Head of caudate nucleus (tissue), 42 donors: ENCODE measurements at regions of chr17 and their contacts with region 1.

Region 1: GRCh38 chr17:27293898-27294688 is at the start of gene WSB1:
- DNase-seq: peak; percentile 89 to 98 (median 96)

Region 2: GRCh38 chr17:27245230-27245696 is 48.8 kb before region 1 on chr17:
- intact Hi-C with region 1: loop called (anchors 10 kb)
- DNase-seq: peak; percentile 72 to 93 (median 86)

Region 3: GRCh38 chr17:27256225-27257030 is 37.7 kb before region 1 on chr17:
- intact Hi-C with region 1: no loop called
- DNase-seq: no peak

Region 4: GRCh38 chr17:27332485-27333409 is 38.7 kb after region 1 on chr17:
- intact Hi-C with region 1: loop called (anchors 1 kb)
- DNase-seq: peak; percentile 94 to 99 (median 97)

Region 5: DNA sequence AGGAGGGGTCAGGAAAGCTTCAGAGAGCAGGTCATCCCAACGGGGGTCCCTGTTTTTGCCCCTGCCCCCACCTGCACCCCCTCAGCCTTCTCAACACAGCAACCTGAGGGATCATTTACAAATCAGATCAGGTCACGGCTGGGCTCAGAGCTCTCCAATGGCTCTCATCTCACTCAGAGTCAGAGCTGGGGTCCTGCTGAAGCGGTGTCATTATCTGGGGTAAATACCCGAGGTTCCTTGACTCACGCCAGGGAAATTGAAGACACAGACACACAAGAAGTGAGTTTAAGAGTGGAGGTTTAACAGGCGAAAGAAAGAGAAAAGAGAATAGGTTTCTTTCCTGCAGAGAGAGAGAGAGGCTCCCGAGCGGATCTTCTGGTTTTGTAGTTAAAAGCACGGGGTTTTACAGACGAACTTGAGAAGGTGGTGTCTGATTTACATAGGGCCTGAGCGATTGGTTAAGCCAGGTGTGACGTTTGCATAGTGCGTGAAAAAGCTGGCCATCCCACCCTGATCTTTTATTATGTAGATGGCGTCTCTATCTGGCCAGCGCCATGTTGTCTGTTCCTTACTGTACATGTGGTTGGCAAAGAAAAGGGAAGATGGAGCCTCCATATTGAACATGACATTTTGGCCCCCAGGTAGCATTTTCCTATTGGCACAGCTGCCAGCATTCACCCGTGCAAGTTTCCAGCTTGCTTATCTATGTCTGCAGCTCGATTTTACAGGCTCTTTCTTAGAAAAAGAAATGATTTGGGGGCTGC is 51.2 kb after region 1 on chr17:
- intact Hi-C with region 1: loop called (anchors 5 kb)
- DNase-seq: peak in 41 of 42 donors; percentile 39 to 91 (median 70)